Panc1 (cell line): ENCODE measurements at regions of chr18 and their contacts with region 1.

Region 1: DNA sequence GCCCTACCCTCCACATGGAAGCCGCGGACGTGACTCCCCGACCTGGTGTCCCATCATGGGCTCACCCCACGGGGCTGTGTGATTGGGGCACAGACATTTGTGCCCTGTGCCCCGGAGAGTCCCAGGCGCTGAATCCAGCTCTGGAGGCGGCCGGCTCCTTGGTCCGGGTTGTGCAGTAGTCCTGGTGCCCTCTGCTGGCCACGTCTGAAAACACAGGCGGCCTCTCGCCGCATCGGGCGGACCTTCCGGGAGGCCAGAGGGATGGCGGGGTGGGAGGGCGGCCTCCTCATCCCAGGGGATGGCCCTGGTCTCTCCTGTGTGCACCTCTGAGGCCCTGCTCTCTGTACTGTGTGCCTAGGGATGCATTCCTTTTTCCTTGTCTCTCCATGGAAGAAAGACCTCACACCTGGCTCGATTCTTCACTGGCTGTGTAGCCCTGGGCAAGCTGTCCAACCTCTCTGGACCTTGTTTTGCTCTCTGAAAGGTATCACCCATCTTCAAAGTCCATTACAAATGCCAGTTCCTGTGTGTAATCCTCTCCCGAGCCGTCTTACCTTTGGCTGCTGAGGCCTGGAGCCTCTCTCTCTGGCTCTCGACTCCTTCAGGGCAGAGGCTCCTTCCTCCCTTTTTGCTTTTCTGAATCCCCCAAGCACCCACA is 27.6 kb downstream of the CELF4 start:
- DNase-seq: peak; percentile 15
- ATAC-seq: peak; percentile 94
- H3K4me3 ChIP-seq: no peak overlapping the region
- H3K27ac ChIP-seq: no peak overlapping the region
- H3K4me1 ChIP-seq: no peaks in the 10 kb centered on the region
- H3K27me3 ChIP-seq: peaks cover 7% of the 10 kb centered on the region; the same call in 1 of the 2 replicates
- CTCF ChIP-seq: peak; percentile 85

Region 2: GRCh38 chr18:37385846-37386778 is 151.9 kb before region 1 on chr18:
- CTCF ChIA-PET with region 1: no interaction called
- POLR2A ChIA-PET with region 1: no interaction called
- in situ Hi-C with region 1: no loop called
- intact Hi-C with region 1: loop called (anchors 2 kb)
- DNase-seq: no peak
- ATAC-seq: no peak
- H3K4me3 ChIP-seq: no peak overlapping the region
- H3K27ac ChIP-seq: no peak overlapping the region
- H3K4me1 ChIP-seq: no peaks in the 10 kb centered on the region
- H3K27me3 ChIP-seq: no peaks in the 10 kb centered on the region
- CTCF ChIP-seq: peak; percentile 60; the same call in 1 of the 2 replicates

Region 3: GRCh38 chr18:37440206-37440605 is 97.8 kb before region 1 on chr18:
- CTCF ChIA-PET with region 1: no interaction called
- POLR2A ChIA-PET with region 1: no interaction called
- in situ Hi-C with region 1: no loop called
- intact Hi-C with region 1: loop called (anchors 5 kb)
- DNase-seq: no peak
- ATAC-seq: no peak
- H3K4me3 ChIP-seq: no peak overlapping the region
- H3K27ac ChIP-seq: no peak overlapping the region
- H3K4me1 ChIP-seq: no peaks in the 10 kb centered on the region
- H3K27me3 ChIP-seq: no peaks in the 10 kb centered on the region; the same call in 1 of the 2 replicates
- CTCF ChIP-seq: no peak

Region 4: GRCh38 chr18:37636831-37637477 is 99.0 kb after region 1 on chr18:
- CTCF ChIA-PET with region 1: no interaction called
- POLR2A ChIA-PET with region 1: no interaction called
- in situ Hi-C with region 1: no loop called
- intact Hi-C with region 1: no loop called
- DNase-seq: no peak
- ATAC-seq: no peak
- H3K4me3 ChIP-seq: no peak overlapping the region
- H3K27ac ChIP-seq: no peak overlapping the region
- H3K4me1 ChIP-seq: no peaks in the 10 kb centered on the region
- H3K27me3 ChIP-seq: no peaks in the 10 kb centered on the region
- CTCF ChIP-seq: no peak